SK-N-SH (cell line): ENCODE measurements at regions of chr13 and their contacts with region 1.

Region 1: DNA sequence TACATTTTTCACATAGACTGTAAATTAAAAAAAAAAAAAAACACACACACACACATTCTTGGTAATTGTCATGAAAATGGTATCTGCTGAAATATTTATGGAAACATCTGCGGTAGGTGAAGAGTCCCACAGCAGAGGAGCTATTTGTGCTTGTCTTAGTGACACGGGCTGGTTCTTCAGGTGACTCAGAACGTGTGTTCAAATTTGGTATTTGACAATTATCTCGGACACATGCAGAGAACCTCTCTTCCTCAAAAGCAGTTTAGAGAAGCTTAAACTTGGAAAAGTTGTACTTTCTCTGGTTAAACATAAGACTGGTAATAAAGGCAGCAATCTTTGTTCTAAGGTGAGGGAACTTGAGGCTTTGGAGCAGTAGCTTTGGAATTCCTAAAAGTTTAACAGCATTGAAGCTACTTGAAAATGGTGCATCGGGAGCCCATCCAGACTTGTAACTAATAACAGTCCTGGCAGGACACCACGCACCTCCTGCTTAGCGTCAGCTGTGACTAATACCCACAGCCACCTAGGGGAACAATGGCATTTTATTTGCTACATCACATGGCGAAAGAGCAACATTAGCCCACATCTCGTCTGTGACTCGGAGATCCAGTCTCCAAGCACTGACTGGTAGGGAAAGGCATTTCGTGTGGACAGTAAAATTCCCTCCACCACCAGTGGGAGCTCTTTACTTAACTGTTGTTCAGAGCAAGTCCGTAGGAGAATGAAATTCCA is 1505.1 kb upstream of the SLC10A2 start:
- DNase-seq: peak; percentile 48
- H3K4me3 ChIP-seq: peak overlapping the region in 1 of 2 experiments; percentile 38; a peak in 1 of 4 replicates
- H3K27ac ChIP-seq: no peak overlapping the region
- H3K4me1 ChIP-seq: peaks cover 0 to 8% of the 10 kb centered on the region in 2 experiments; a peak in 1 of 4 replicates
- H3K27me3 ChIP-seq: no peaks in the 10 kb centered on the region; the same call in 1 of the 2 replicates
- CTCF ChIP-seq: peak; percentile 69
- EP300 ChIP-seq: no peak
- RAD21 ChIP-seq: peak; percentile 93

Region 2: DNA sequence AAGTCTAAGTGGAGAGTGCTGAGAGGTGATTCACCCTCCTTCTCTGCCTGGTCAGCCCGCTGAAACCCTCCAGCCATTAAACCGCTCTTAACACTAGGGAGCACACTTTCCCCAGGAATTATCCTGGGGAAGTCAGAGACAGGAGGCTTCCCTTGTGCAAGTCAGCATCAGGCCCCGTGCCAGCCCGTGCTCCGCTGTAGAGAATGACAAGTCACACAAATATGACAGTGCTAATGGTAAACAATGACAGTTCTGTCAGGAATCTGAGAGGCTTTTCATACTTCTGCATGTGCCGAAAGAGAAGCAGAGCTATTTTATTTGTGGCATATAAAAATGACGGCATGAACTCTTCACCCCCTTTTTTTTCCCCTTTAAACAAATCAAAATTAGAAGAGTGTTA is 688.2 kb before region 1 on chr13:
- CTCF ChIA-PET with region 1: interaction called, 11 read pairs
- POLR2A ChIA-PET with region 1: no interaction called
- DNase-seq: peak; percentile 56
- H3K4me3 ChIP-seq: peak overlapping the region in 1 of 2 experiments; percentile 1; a peak in 1 of 4 replicates
- H3K27ac ChIP-seq: peak overlapping the region in 1 of 2 experiments; percentile 82; a peak in 2 of 4 replicates
- H3K4me1 ChIP-seq: peaks cover 0 to 3% of the 10 kb centered on the region in 2 experiments; a peak in 1 of 4 replicates
- H3K27me3 ChIP-seq: no peaks in the 10 kb centered on the region
- CTCF ChIP-seq: peak; percentile 72
- EP300 ChIP-seq: no peak
- RAD21 ChIP-seq: peak; percentile 88

Region 3: DNA sequence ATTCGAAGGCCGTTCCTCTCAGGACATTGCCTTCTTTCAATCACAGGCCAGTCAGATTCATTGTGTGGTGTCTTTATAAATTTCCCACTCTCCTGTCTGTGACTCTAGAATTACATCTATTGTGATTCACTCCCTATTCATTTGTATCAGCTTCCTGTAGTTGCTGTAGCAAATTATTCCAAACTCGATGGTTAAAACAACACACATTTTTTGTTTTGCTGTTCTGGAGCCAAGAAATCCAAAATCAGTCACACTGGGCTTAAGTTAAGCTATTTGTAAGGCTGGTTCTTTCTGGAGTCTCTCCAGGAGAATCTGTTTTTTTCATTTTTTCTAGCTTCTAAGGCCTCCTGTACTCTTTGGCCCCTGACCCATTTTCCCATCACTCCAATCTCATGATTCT is 18.1 kb before region 1 on chr13:
- CTCF ChIA-PET with region 1: interaction called, 38 read pairs
- POLR2A ChIA-PET with region 1: no interaction called
- DNase-seq: no peak
- H3K4me3 ChIP-seq: no peak overlapping the region
- H3K27ac ChIP-seq: no peak overlapping the region
- H3K4me1 ChIP-seq: no peaks in the 10 kb centered on the region
- H3K27me3 ChIP-seq: no peaks in the 10 kb centered on the region
- CTCF ChIP-seq: no peak
- EP300 ChIP-seq: no peak
- RAD21 ChIP-seq: no peak

Region 4: GRCh38 chr13:104584481-104584880 is 13.2 kb after region 1 on chr13:
- CTCF ChIA-PET with region 1: interaction called, 10 read pairs
- POLR2A ChIA-PET with region 1: no interaction called
- DNase-seq: no peak
- H3K4me3 ChIP-seq: no peak overlapping the region
- H3K27ac ChIP-seq: peak overlapping the region in 1 of 2 experiments; percentile 13; a peak in 2 of 4 replicates
- H3K4me1 ChIP-seq: no peaks in the 10 kb centered on the region; a peak in 1 of 4 replicates
- H3K27me3 ChIP-seq: no peaks in the 10 kb centered on the region
- CTCF ChIP-seq: no peak
- EP300 ChIP-seq: no peak
- RAD21 ChIP-seq: no peak

Region 5: DNA sequence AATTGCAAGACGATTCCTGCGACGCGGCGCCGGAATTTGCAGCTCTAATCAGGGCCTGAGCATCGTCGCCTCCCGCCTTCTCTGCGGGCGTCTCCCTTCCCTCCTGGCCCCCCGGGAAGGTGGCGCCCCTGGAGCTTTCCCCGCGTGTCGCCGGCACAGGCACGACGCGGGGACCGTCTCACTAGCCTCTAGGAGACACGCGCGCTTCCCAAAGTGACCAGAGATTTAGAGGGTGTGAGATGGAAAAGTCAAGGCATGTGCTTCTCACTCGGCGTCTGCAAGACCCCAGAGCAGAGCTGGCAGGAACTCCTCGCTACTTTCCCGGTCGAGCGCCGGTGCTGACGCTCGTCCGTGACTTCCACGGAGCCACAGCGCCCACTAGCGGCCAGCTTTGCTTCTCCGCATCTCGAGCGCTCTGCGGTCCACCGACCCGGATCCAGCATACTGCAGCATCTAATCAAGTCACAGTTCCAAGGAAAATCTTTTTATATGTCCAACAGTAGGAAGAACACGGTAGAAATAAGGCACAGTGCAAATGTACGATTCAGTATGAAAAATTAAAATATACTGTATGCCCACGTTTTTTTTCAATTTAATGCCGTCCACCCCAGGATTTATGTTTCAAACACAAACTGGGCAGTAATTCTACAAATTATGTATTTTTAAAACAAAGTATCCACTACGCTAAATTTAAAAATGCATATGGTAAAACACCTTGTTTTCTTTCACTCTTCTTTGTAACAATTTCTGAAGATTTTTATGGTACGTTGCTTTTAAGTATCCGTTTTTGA is 1965.1 kb after region 1 on chr13:
- CTCF ChIA-PET with region 1: interaction called, 58 read pairs
- POLR2A ChIA-PET with region 1: no interaction called
- DNase-seq: peak; percentile 81
- H3K4me3 ChIP-seq: peak overlapping the region; percentile 76 to 77
- H3K27ac ChIP-seq: peak overlapping the region in 1 of 2 experiments; percentile 62; a peak in 1 of 4 replicates
- H3K4me1 ChIP-seq: peaks cover 0 to 8% of the 10 kb centered on the region in 2 experiments; a peak in 2 of 4 replicates
- H3K27me3 ChIP-seq: no peaks in the 10 kb centered on the region
- CTCF ChIP-seq: peak; percentile 96
- EP300 ChIP-seq: no peak
- RAD21 ChIP-seq: peak; percentile 95